Activated naive CD4-positive, alpha-beta T cell treated with anti-CD3 and anti-CD28 coated beads, Interleukin-2, amount 10 ng/mL, durations not matched to agents 7 days and 5 days (primary cell): ENCODE measurements at regions of chr1 and their contacts with region 1.

Region 1: DNA sequence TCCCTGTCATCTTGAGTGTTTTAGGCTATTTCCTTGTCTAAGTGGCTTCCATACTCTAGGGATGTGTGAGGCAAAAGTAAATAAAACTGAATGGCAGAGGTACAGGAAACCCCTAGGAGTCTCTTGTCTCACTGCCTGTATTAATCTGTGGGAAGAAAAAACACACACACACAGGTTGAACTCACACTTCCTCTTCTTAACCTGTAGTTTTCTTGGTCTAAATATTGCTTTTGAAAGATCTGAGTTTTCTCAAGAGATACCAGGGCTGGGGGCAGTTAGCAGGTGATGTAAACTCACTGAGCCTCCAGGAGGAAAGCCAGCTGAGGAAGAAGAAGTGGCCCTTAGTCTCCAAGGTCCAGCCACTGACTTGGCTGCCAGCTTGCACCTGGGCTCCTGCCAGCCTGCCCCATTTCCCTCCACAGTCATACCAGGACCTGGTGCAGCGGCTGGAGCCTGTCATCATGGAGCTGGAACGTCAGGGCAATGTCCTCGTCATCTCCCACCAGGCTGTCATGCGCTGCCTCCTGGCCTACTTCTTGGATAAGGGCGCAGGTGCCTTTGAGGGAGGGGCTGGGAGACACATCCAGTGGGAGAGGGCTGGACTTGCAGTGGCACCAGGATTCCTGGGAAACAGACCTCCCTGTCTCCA is 16.9 kb downstream of the PFKFB2 start:
- DNase-seq: no peak
- H3K4me3 Mint-ChIP-seq: no peak overlapping the region
- H3K27ac Mint-ChIP-seq: peak overlapping the region; percentile 78
- H3K4me1 Mint-ChIP-seq: peaks cover 46% of the 10 kb centered on the region
- H3K27me3 Mint-ChIP-seq: peaks cover 12% of the 10 kb centered on the region

Region 2: DNA sequence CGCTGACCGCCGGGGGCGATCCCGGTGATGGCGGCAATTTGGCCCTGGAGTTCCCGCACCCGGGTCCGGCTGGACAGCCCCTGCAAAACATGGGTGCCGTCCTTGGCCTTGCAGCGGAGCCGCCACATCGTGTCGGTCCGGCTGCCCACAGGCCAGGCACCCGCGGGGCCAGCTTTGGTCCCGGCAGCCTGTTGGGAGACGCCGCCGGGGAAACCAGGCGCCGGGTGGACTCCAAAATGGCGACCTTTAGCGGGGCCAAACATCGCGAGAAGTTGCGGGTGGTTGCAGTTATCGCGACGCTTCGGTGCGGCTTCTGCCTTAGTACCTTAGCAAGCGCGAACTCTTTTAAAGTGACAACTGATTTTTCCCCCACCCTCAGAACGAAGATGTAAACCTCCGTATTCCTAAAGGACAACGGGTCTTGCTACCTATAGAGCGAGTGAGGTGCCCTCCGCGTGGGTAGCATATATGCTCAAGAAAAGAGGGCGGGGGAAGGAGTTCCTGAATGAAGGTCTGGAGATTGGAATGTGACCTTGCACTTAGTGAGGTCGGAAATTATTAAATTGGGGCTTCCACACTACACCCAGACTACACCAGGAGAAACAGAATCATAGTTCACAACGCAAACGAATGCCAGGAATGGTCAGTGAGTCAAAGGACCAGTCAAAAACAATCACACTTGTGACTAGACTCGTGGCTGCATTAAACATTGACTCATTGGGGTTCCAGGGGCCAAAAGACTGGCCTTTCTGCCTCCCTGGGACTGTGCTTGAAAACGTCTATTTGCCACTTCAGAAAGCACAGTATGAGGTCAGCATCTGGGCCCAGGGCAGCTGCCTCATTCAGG is 19.0 kb before region 1 on chr1 and contains the start of gene YOD1:
- CTCF ChIA-PET with region 1: interaction called, 17 read pairs
- DNase-seq: peak; percentile 94
- H3K4me3 Mint-ChIP-seq: peak within 1 kb of the TSS; percentile 100
- H3K27ac Mint-ChIP-seq: peak within 1 kb of the TSS; percentile 98
- H3K4me1 Mint-ChIP-seq: peaks cover 69% of the 10 kb centered on the region
- H3K27me3 Mint-ChIP-seq: peaks cover 21% of the 10 kb centered on the region

Region 3: GRCh38 chr1:207084701-207085180 is 14.8 kb after region 1 on chr1:
- CTCF ChIA-PET with region 1: interaction called, 14 read pairs
- DNase-seq: peak; percentile 68
- H3K4me3 Mint-ChIP-seq: no peak overlapping the region
- H3K27ac Mint-ChIP-seq: no peak overlapping the region
- H3K4me1 Mint-ChIP-seq: peaks cover 34% of the 10 kb centered on the region
- H3K27me3 Mint-ChIP-seq: peaks cover 13% of the 10 kb centered on the region